K562 (cell line): ENCODE measurements at regions of chr1 and their contacts with region 1.

Region 1: GRCh38 chr1:21261551-21262281 is 28.5 kb downstream of the ECE1 start:
- DNase-seq: peak; percentile 66 to 88 (median 76)
- ATAC-seq: peak; percentile 83
- H3K4me3 ChIP-seq: peak overlapping the region; percentile 29
- H3K27ac ChIP-seq: peak overlapping the region; percentile 77
- H3K4me1 ChIP-seq: peaks cover 31 to 44% of the 10 kb centered on the region in 2 experiments
- H3K27me3 ChIP-seq: no peaks in the 10 kb centered on the region
- CTCF ChIP-seq: no peak
- EP300 ChIP-seq: peak; percentile 71
- POLR2A ChIP-seq: peak; percentile 73
- RAD21 ChIP-seq: peak in 1 of 2 experiments; percentile 25; a peak in 1 of 4 replicates

Region 2: GRCh38 chr1:20565234-20565633 is 696.5 kb before region 1 on chr1:
- CTCF ChIA-PET with region 1: no interaction called
- POLR2A ChIA-PET with region 1: no interaction called
- in situ Hi-C with region 1: no loop called
- intact Hi-C with region 1: no loop called
- DNase-seq: no peak
- ATAC-seq: no peak
- H3K4me3 ChIP-seq: no peak overlapping the region
- H3K27ac ChIP-seq: no peak overlapping the region
- H3K4me1 ChIP-seq: no peaks in the 10 kb centered on the region
- H3K27me3 ChIP-seq: peaks cover 54 to 78% of the 10 kb centered on the region in 2 experiments
- CTCF ChIP-seq: no peak
- EP300 ChIP-seq: no peak
- POLR2A ChIP-seq: no peak
- RAD21 ChIP-seq: no peak

Region 3: GRCh38 chr1:21344750-21345443 is 83.2 kb after region 1 on chr1:
- CTCF ChIA-PET with region 1: no interaction called
- POLR2A ChIA-PET with region 1: interaction called, 9 read pairs
- in situ Hi-C with region 1: no loop called
- intact Hi-C with region 1: loop called (anchors 5 kb)
- DNase-seq: peak in 2 of 4 experiments; percentile 41 to 45
- ATAC-seq: peak; percentile 16
- H3K4me3 ChIP-seq: peak overlapping the region; percentile 57
- H3K27ac ChIP-seq: peak overlapping the region; percentile 59; the same call in 2 of the 3 replicates
- H3K4me1 ChIP-seq: peaks cover 25 to 46% of the 10 kb centered on the region in 2 experiments
- H3K27me3 ChIP-seq: no peaks in the 10 kb centered on the region
- CTCF ChIP-seq: no peak
- EP300 ChIP-seq: no peak
- POLR2A ChIP-seq: no peak; the same call in 1 of the 2 replicates
- RAD21 ChIP-seq: no peak